ENCODE measurements at regions of chr1 and their contacts with region 1.

Region 1: DNA sequence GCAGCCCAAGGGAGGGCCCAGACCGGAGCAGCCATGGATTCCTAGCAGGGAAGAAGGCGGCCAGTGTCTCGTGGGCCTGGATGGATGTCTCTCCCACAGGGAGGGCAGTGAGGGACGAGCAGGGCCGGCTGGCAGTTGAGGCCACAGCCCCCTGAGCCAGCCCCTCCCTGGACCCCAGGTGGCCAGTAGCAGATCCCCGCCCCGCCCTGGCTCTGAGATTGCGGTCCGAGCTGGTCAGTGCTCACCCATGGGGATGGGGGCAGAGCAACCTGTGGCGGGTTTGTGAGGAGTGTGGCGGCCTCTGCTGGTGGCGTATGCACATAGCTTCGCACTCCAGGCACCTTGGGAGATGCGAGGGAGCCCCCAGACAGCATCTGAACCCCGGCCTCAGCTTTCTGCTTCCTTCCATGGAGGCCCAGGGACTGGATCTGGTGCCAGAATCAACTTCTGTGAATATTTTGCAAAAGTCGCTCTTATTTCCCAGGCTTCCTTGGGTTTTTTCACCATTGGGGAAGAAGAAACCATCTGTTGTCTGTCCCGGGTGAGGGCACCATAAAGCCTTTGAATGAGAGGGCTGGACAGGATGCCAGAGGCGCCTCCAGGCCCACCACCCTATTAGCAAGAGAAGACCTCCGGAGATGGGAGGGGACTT is 8.4 kb upstream of the KCNN3 start:
- DNase-seq: peak; percentile 87
- H3K4me3 ChIP-seq: peak overlapping the region in 1 of 2 experiments; percentile 38; a peak in 1 of 4 replicates
- H3K27ac ChIP-seq: no peak overlapping the region
- H3K4me1 ChIP-seq: peaks cover 0 to 3% of the 10 kb centered on the region in 2 experiments; a peak in 1 of 4 replicates
- H3K27me3 ChIP-seq: no peaks in the 10 kb centered on the region; the same call in 1 of the 2 replicates
- CTCF ChIP-seq: peak; percentile 88
- EP300 ChIP-seq: no peak
- RAD21 ChIP-seq: peak; percentile 96

Region 2: GRCh38 chr1:154663471-154664060 is 214.9 kb before region 1 on chr1:
- CTCF ChIA-PET with region 1: interaction called, 74 read pairs
- POLR2A ChIA-PET with region 1: no interaction called
- DNase-seq: peak; percentile 25
- H3K4me3 ChIP-seq: no peak overlapping the region
- H3K27ac ChIP-seq: no peak overlapping the region
- H3K4me1 ChIP-seq: no peaks in the 10 kb centered on the region; a peak in 1 of 4 replicates
- H3K27me3 ChIP-seq: peaks cover 17% of the 10 kb centered on the region; the same call in 1 of the 2 replicates
- CTCF ChIP-seq: no peak
- EP300 ChIP-seq: no peak
- RAD21 ChIP-seq: no peak

Region 3: DNA sequence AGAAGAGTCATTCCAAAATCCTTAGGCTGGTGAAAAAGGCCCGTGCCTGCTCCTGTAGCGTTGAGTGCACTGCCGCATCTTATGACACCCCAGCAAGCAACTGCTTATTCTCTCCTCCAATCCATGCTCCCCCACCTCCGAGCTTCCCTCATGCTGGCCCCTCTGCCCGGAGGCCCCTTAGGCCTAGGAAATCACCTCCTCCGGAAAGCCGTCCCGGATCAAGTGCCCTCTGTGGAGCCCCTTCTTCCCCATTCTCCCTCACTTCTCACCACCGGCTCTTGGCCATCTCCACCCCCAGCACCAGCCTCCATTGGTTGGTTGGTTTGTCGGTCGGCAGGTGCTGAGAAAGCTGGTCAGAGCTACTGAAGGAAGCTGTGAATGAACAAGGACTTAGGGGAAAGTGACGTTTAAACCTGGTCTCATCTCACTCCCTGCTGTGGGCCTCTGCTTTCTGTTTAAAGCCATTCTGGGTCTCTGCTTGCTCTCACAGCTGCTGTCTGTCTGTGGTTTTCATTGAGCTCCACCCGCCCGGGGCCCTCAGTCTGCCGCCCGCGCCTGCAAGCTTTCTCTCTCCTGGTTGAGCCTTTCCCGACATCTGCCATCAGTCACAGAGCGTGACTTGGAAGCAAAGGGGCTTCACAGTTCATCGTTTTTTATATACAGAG is 130.6 kb before region 1 on chr1:
- CTCF ChIA-PET with region 1: interaction called, 10 read pairs
- POLR2A ChIA-PET with region 1: no interaction called
- DNase-seq: peak; percentile 78
- H3K4me3 ChIP-seq: no peak overlapping the region
- H3K27ac ChIP-seq: peak overlapping the region in 1 of 2 experiments; percentile 85; a peak in 2 of 4 replicates
- H3K4me1 ChIP-seq: peaks cover 0 to 53% of the 10 kb centered on the region in 2 experiments; a peak in 2 of 4 replicates
- H3K27me3 ChIP-seq: peaks cover 56% of the 10 kb centered on the region
- CTCF ChIP-seq: no peak
- EP300 ChIP-seq: peak in 1 of 2 experiments; percentile 31; a peak in 1 of 4 replicates
- RAD21 ChIP-seq: no peak

Region 4: GRCh38 chr1:154772606-154773506 is 105.6 kb before region 1 on chr1:
- CTCF ChIA-PET with region 1: interaction called, 23 read pairs
- POLR2A ChIA-PET with region 1: no interaction called
- DNase-seq: no peak
- H3K4me3 ChIP-seq: no peak overlapping the region
- H3K27ac ChIP-seq: no peak overlapping the region
- H3K4me1 ChIP-seq: peaks cover 0 to 23% of the 10 kb centered on the region in 2 experiments; a peak in 1 of 4 replicates
- H3K27me3 ChIP-seq: peaks cover 4% of the 10 kb centered on the region; the same call in 1 of the 2 replicates
- CTCF ChIP-seq: no peak
- EP300 ChIP-seq: no peak
- RAD21 ChIP-seq: no peak

Region 5: GRCh38 chr1:154891452-154891851 is 13.0 kb after region 1 on chr1:
- CTCF ChIA-PET with region 1: interaction called, 14 read pairs
- POLR2A ChIA-PET with region 1: no interaction called
- DNase-seq: no peak
- H3K4me3 ChIP-seq: no peak overlapping the region
- H3K27ac ChIP-seq: no peak overlapping the region
- H3K4me1 ChIP-seq: peaks cover 0 to 8% of the 10 kb centered on the region in 2 experiments; a peak in 2 of 4 replicates
- H3K27me3 ChIP-seq: peaks cover 30% of the 10 kb centered on the region
- CTCF ChIP-seq: no peak
- EP300 ChIP-seq: no peak
- RAD21 ChIP-seq: no peak

Region 6: GRCh38 chr1:155026593-155026992 is 148.1 kb after region 1 on chr1:
- CTCF ChIA-PET with region 1: no interaction called
- POLR2A ChIA-PET with region 1: no interaction called
- DNase-seq: no peak
- H3K4me3 ChIP-seq: no peak overlapping the region
- H3K27ac ChIP-seq: no peak overlapping the region
- H3K4me1 ChIP-seq: peaks cover 0 to 4% of the 10 kb centered on the region in 2 experiments; a peak in 1 of 4 replicates
- H3K27me3 ChIP-seq: no peaks in the 10 kb centered on the region
- CTCF ChIP-seq: no peak
- EP300 ChIP-seq: no peak
- RAD21 ChIP-seq: no peak

Region 7: DNA sequence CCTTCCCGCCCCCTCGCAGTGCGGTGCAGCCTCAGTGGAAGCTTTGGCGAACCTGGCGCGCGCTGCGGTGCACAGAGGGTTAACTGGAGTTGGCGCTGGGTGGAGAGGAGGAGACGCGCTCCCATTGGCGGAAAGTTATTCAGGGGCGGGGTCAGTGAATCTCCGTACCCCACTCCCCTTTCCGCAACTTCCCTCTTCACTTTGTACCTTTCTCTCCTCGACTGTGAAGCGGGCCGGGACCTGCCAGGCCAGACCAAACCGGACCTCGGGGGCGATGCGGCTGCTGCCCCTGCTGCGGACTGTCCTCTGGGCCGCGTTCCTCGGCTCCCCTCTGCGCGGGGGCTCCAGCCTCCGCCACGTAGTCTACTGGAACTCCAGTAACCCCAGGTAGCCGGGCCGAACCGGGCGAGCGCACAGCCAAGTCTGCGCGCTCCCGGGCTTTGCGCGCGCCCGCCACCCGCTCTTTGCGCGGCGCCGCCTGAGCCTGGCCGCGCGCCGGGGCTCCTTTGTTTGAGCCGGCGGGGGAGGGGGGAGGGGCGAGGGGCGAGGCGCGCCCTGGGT is 185.1 kb after region 1 on chr1 and contains the start of gene EFNA4:
- CTCF ChIA-PET with region 1: interaction called, 12 read pairs
- POLR2A ChIA-PET with region 1: no interaction called
- DNase-seq: peak; percentile 95
- H3K4me3 ChIP-seq: peak within 1 kb of the TSS; percentile 79 to 92
- H3K27ac ChIP-seq: peak within 1 kb of the TSS; percentile 83 to 85
- H3K4me1 ChIP-seq: peaks cover 0 to 25% of the 10 kb centered on the region in 2 experiments; a peak in 2 of 4 replicates
- H3K27me3 ChIP-seq: no peaks in the 10 kb centered on the region
- CTCF ChIP-seq: no peak
- EP300 ChIP-seq: no peak
- RAD21 ChIP-seq: no peak
- polyA plus RNA-seq, gene EFNA4: 15.9 and 17.7 TPM in 2 replicates

Measured in SK-N-SH (cell line).